CD4-positive, alpha-beta memory T cell (primary cell): ENCODE measurements at regions of chr5 and their contacts with region 1.

Region 1: DNA sequence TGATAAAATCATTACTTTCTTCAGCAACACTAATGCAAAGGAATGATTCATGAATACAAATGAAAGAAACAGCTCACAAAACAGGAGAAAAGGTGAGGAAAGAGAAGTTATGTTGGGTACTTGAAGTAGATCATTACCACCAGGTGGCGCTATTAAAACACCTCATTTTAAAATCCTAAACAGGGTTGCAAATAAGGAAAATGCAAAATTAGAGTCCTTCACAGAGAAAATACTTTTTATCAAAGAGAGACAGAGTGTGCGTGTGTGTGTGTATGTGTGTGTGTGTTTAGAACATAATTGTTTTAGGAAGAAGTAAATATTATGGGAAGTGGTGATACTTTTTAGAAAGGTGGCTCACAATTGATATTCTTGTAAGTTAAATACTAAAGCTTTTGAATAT is 49.5 kb upstream of the CD180 start:
- DNase-seq: peak in 4 of 5 donors; percentile 60 to 67 (median 64)
- H3K4me3 ChIP-seq: no peak overlapping the region
- H3K4me3 Mint-ChIP-seq: no peak overlapping the region
- H3K27ac ChIP-seq: no peak overlapping the region
- H3K27ac Mint-ChIP-seq: no peak overlapping the region
- H3K4me1 ChIP-seq: peaks cover 18% of the 10 kb centered on the region
- H3K4me1 Mint-ChIP-seq: peaks cover 8 to 20% (median 11%) of the 10 kb centered on the region in 4 donors
- H3K27me3 ChIP-seq: no peaks in the 10 kb centered on the region
- H3K27me3 Mint-ChIP-seq: peaks cover 0 to 1% of the 10 kb centered on the region in 2 donors

Region 2: GRCh38 chr5:67178085-67178484 is 68.0 kb before region 1 on chr5:
- CTCF ChIA-PET with region 1: no interaction called
- POLR2A ChIA-PET with region 1: no interaction called
- intact Hi-C with region 1: no loop called
- DNase-seq: no peak
- H3K4me3 ChIP-seq: no peak overlapping the region
- H3K4me3 Mint-ChIP-seq: peak overlapping the region in 2 of 8 donors; percentile 20 to 43
- H3K27ac ChIP-seq: no peak overlapping the region
- H3K27ac Mint-ChIP-seq: peak overlapping the region in 1 of 7 donors; percentile 37
- H3K4me1 ChIP-seq: peaks cover 21% of the 10 kb centered on the region
- H3K4me1 Mint-ChIP-seq: peaks cover 23 to 48% (median 38%) of the 10 kb centered on the region in 4 donors
- H3K27me3 ChIP-seq: no peaks in the 10 kb centered on the region
- H3K27me3 Mint-ChIP-seq: no peaks in the 10 kb centered on the region

Region 3: GRCh38 chr5:67215583-67216471 is 30.3 kb before region 1 on chr5:
- CTCF ChIA-PET with region 1: interaction called, 26 read pairs
- POLR2A ChIA-PET with region 1: interaction called, 7 read pairs
- intact Hi-C with region 1: no loop called
- DNase-seq: peak; percentile 72 to 82 (median 80)
- H3K4me3 ChIP-seq: peak overlapping the region; percentile 10 to 44
- H3K4me3 Mint-ChIP-seq: peak overlapping the region; percentile 52 to 91 (median 82)
- H3K27ac ChIP-seq: peak overlapping the region; percentile 52
- H3K27ac Mint-ChIP-seq: peak overlapping the region; percentile 94 to 99 (median 98)
- H3K4me1 ChIP-seq: peaks cover 65% of the 10 kb centered on the region
- H3K4me1 Mint-ChIP-seq: peaks cover 57 to 69% (median 60%) of the 10 kb centered on the region in 4 donors
- H3K27me3 ChIP-seq: no peaks in the 10 kb centered on the region
- H3K27me3 Mint-ChIP-seq: no peaks in the 10 kb centered on the region

Region 4: GRCh38 chr5:67234671-67235176 is 11.4 kb before region 1 on chr5:
- CTCF ChIA-PET with region 1: interaction called, 20 read pairs
- POLR2A ChIA-PET with region 1: no interaction called
- intact Hi-C with region 1: no loop called
- DNase-seq: no peak
- H3K4me3 ChIP-seq: no peak overlapping the region
- H3K4me3 Mint-ChIP-seq: no peak overlapping the region
- H3K27ac ChIP-seq: no peak overlapping the region
- H3K27ac Mint-ChIP-seq: no peak overlapping the region
- H3K4me1 ChIP-seq: no peaks in the 10 kb centered on the region
- H3K4me1 Mint-ChIP-seq: peaks cover 0 to 4% (median 1%) of the 10 kb centered on the region in 4 donors
- H3K27me3 ChIP-seq: no peaks in the 10 kb centered on the region
- H3K27me3 Mint-ChIP-seq: no peaks in the 10 kb centered on the region

Region 5: DNA sequence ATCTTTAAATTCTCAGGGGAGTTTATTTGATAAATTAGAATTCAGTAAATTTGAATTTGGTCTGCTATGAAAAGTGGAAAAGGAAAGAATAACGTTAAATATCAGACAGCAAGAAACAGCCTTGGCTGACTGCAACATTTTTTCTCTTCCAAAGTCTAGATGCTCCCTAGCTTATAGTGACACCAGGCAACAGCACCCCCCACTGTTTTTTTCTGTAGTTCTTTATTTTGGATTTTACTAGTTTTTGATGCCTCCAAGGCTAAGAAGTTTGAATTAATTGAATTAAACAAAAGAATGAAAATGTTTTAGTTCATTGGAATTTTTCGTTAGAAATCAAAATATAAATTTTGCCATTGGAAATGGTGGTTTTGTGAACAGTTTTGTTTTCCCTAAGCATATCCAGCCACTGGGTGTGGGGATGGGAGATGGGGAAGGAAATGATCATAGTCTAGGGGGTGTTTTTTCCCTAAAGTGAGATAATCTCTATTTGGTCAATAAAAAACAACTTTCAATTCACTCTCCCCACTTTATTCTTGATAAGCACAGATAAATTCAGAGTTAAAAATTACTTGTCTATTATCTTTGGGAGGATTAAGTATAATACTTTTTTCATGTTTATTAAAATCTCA is 149.8 kb after region 1 on chr5:
- CTCF ChIA-PET with region 1: interaction called, 3 read pairs
- POLR2A ChIA-PET with region 1: no interaction called
- intact Hi-C with region 1: loop called (anchors 2 kb)
- DNase-seq: no peak
- H3K4me3 ChIP-seq: no peak overlapping the region
- H3K4me3 Mint-ChIP-seq: no peak overlapping the region
- H3K27ac ChIP-seq: no peak overlapping the region
- H3K27ac Mint-ChIP-seq: no peak overlapping the region
- H3K4me1 ChIP-seq: no peaks in the 10 kb centered on the region
- H3K4me1 Mint-ChIP-seq: no peaks in the 10 kb centered on the region
- H3K27me3 ChIP-seq: no peaks in the 10 kb centered on the region
- H3K27me3 Mint-ChIP-seq: peaks cover 0 to 4% of the 10 kb centered on the region in 2 donors

Region 6: DNA sequence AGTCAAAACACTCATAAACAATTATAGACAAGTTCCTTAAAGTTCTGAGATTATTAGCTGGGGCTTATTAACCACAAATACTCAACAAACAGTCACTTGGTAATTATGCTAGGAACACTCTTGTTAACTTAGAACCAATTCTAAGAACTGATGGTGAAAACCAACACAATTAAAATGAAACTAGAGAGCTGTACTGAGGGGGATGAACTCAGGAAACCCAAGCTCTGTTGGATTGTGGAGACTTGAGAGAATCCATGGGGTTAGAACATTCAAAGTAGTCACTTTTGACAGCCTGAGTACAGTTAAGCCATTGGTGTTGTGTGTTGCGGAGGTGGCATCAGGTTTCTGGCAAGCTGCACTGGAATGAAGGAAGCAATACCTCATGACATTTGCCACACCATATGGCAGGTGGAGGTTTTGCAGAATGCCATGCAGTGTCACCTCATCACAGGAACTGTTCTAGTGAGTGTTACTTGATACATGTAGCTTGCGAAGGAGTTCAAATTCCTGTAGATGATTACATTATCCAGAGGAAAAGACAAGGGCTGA is 431.4 kb after region 1 on chr5:
- CTCF ChIA-PET with region 1: no interaction called
- POLR2A ChIA-PET with region 1: no interaction called
- intact Hi-C with region 1: no loop called
- DNase-seq: no peak
- H3K4me3 ChIP-seq: no peak overlapping the region
- H3K4me3 Mint-ChIP-seq: no peak overlapping the region
- H3K27ac ChIP-seq: no peak overlapping the region
- H3K27ac Mint-ChIP-seq: no peak overlapping the region
- H3K4me1 ChIP-seq: no peaks in the 10 kb centered on the region
- H3K4me1 Mint-ChIP-seq: no peaks in the 10 kb centered on the region
- H3K27me3 ChIP-seq: no peaks in the 10 kb centered on the region
- H3K27me3 Mint-ChIP-seq: peaks cover 0 to 3% of the 10 kb centered on the region in 2 donors

Region 7: GRCh38 chr5:68252673-68253623 is 1006.8 kb after region 1 on chr5:
- CTCF ChIA-PET with region 1: interaction called, 84 read pairs
- POLR2A ChIA-PET with region 1: interaction called, 4 read pairs
- intact Hi-C with region 1: loop called (anchors 1 kb)
- DNase-seq: peak in 3 of 5 donors; percentile 36 to 41 (median 38)
- H3K4me3 ChIP-seq: no peak overlapping the region
- H3K4me3 Mint-ChIP-seq: peak overlapping the region in 2 of 8 donors; percentile 52 to 66
- H3K27ac ChIP-seq: no peak overlapping the region
- H3K27ac Mint-ChIP-seq: peak overlapping the region in 5 of 7 donors; percentile 1 to 93 (median 62)
- H3K4me1 ChIP-seq: peaks cover 95% of the 10 kb centered on the region
- H3K4me1 Mint-ChIP-seq: peaks cover 79 to 97% (median 90%) of the 10 kb centered on the region in 4 donors
- H3K27me3 ChIP-seq: no peaks in the 10 kb centered on the region
- H3K27me3 Mint-ChIP-seq: no peaks in the 10 kb centered on the region

Region 8: GRCh38 chr5:68279984-68280383 is 1033.9 kb after region 1 on chr5:
- CTCF ChIA-PET with region 1: interaction called, 10 read pairs
- POLR2A ChIA-PET with region 1: interaction called, 3 read pairs
- intact Hi-C with region 1: loop called (anchors 5 kb)
- DNase-seq: peak; percentile 78 to 88 (median 84)
- H3K4me3 ChIP-seq: peak overlapping the region; percentile 76 to 77
- H3K4me3 Mint-ChIP-seq: peak overlapping the region; percentile 89 to 97 (median 94)
- H3K27ac ChIP-seq: peak overlapping the region; percentile 66
- H3K27ac Mint-ChIP-seq: peak overlapping the region; percentile 89 to 99 (median 96)
- H3K4me1 ChIP-seq: peaks cover 81% of the 10 kb centered on the region
- H3K4me1 Mint-ChIP-seq: peaks cover 66 to 91% (median 75%) of the 10 kb centered on the region in 4 donors
- H3K27me3 ChIP-seq: no peaks in the 10 kb centered on the region
- H3K27me3 Mint-ChIP-seq: no peaks in the 10 kb centered on the region

Region 9: GRCh38 chr5:68962757-68963484 is 1716.8 kb after region 1 on chr5:
- CTCF ChIA-PET with region 1: no interaction called
- POLR2A ChIA-PET with region 1: no interaction called
- intact Hi-C with region 1: loop called (anchors 2 kb)
- DNase-seq: no peak
- H3K4me3 ChIP-seq: no peak overlapping the region
- H3K4me3 Mint-ChIP-seq: no peak overlapping the region
- H3K27ac ChIP-seq: no peak overlapping the region
- H3K27ac Mint-ChIP-seq: peak overlapping the region in 1 of 7 donors; percentile 1
- H3K4me1 ChIP-seq: no peaks in the 10 kb centered on the region
- H3K4me1 Mint-ChIP-seq: peaks cover 0 to 4% (median 0%) of the 10 kb centered on the region in 4 donors
- H3K27me3 ChIP-seq: no peaks in the 10 kb centered on the region
- H3K27me3 Mint-ChIP-seq: peaks cover 0 to under 1% of the 10 kb centered on the region in 2 donors